ENCODE measurements at regions of chr14 and their contacts with region 1.

Region 1: GRCh38 chr14:96297000-96297399 is 41.0 kb downstream of the BDKRB1 start:
- DNase-seq: no peak
- H3K4me3 ChIP-seq: no peak overlapping the region
- H3K27ac ChIP-seq: no peak overlapping the region
- H3K4me1 ChIP-seq: no peaks in the 10 kb centered on the region
- H3K27me3 ChIP-seq: no peaks in the 10 kb centered on the region
- CTCF ChIP-seq: peak; percentile 36 to 39

Region 2: GRCh38 chr14:96424109-96424989 is 127.3 kb after region 1 on chr14:
- intact Hi-C with region 1: loop called (anchors 5 kb)
- DNase-seq: peak in 1 of 2 donors; percentile 21
- H3K4me3 ChIP-seq: peak overlapping the region; percentile 11 to 39
- H3K27ac ChIP-seq: no peak overlapping the region
- H3K4me1 ChIP-seq: peaks cover 0 to 7% (median 5%) of the 10 kb centered on the region in 4 donors
- H3K27me3 ChIP-seq: peaks cover 0 to 12% of the 10 kb centered on the region in 2 donors
- CTCF ChIP-seq: peak; percentile 73 to 87